ENCODE measurements at regions of chr11 and their contacts with region 1.

Region 1: GRCh38 chr11:30346068-30346688 is 23.3 kb downstream of the ARL14EP start:
- DNase-seq: peak in 1 of 2 donors; percentile 87
- H3K4me3 ChIP-seq: no peak overlapping the region
- H3K27ac ChIP-seq: no peak overlapping the region
- H3K4me1 ChIP-seq: no peaks in the 10 kb centered on the region
- H3K27me3 ChIP-seq: no peaks in the 10 kb centered on the region
- CTCF ChIP-seq: peak in 4 of 7 experiments; percentile 45 to 74 (median 56)
- EP300 ChIP-seq: no peak
- POLR2A ChIP-seq: no peak

Region 2: DNA sequence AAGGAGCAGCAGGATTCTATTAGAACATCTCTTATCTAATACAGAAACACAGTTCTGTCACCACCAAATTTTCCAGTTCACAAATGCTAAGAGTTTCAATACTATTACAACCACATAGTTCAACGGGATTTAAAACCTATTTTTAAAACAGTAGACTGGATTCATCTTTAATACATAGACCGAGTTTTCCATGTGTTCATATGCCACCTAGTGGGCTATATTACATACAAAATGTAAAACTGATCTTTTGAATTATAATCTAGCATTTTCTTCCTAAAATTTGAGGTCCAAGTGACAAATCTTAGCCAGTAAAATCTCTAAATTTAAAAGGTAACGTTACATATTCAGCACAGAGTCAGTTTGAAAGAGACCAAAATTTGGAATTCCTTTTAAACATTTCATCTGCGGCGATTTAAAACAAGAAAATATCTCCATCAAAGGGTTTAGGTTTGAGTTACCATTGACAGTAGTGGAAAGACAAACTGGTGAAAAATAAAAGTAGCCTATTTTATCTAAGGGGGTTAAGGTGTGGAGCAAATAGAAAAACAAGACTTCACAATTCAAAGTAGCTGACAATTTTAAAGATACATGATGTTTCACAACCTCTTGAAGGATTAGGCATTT is 509.3 kb after region 1 on chr11:
- intact Hi-C with region 1: loop called (anchors 10 kb)
- DNase-seq: peak in 1 of 2 donors; percentile 38
- H3K4me3 ChIP-seq: no peak overlapping the region
- H3K27ac ChIP-seq: no peak overlapping the region
- H3K4me1 ChIP-seq: no peaks in the 10 kb centered on the region
- H3K27me3 ChIP-seq: no peaks in the 10 kb centered on the region
- CTCF ChIP-seq: peak in 2 of 7 experiments; percentile 19 to 22
- EP300 ChIP-seq: no peak
- POLR2A ChIP-seq: no peak

Region 3: DNA sequence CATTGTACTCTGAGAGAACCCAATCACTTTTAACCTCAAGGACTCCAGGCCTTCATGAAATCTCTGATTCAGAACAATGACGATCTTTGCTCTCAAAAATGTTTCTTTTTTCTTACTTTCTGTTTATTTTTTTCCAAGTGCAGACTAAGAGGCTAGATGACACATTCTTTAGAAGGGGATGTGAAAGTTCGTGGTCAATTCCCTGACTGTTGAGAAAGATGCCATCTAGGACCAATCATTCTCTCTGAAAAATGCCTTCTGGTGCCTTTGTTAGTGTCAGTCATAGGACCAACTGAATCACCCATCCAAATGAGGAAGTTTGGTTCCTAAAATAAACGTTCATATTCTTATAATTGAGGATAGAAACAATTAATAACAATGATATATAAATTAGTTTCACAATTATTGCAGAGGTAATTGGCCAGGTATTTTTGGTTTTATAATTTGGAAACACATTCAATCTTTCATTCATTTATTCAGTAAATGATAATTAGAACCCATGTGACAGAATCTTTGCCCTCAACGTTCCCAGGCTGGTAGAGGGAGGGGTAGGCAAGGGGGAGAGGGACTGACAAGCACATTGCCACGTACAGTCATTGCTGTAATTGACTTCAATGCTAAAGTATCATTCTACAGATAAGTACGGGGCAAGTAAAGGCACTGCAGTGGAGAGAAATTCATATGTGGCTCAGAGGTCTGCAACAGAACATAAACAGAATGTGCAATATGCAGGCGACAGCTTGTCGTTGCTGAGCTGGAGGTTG is 573.4 kb after region 1 on chr11:
- intact Hi-C with region 1: loop called (anchors 10 kb)
- DNase-seq: peak in 1 of 2 donors; percentile 10
- H3K4me3 ChIP-seq: no peak overlapping the region
- H3K27ac ChIP-seq: no peak overlapping the region
- H3K4me1 ChIP-seq: no peaks in the 10 kb centered on the region
- H3K27me3 ChIP-seq: no peaks in the 10 kb centered on the region
- CTCF ChIP-seq: no peak
- EP300 ChIP-seq: no peak
- POLR2A ChIP-seq: no peak